ENCODE measurements at regions of chr13 and their contacts with region 1.

Region 1: GRCh38 chr13:41137951-41138350 is 5.3 kb upstream of the KBTBD6 start:
- DNase-seq: peak; percentile 81
- ATAC-seq: peak; percentile 54
- H3K4me3 ChIP-seq: peak overlapping the region; percentile 41; the same call in 1 of the 2 replicates
- H3K27ac ChIP-seq: peak overlapping the region; percentile 99
- H3K4me1 ChIP-seq: peaks cover 41% of the 10 kb centered on the region
- H3K27me3 ChIP-seq: no peaks in the 10 kb centered on the region
- CTCF ChIP-seq: no peak

Region 2: GRCh38 chr13:41188584-41188983 is 50.6 kb after region 1 on chr13:
- CTCF ChIA-PET with region 1: no interaction called
- POLR2A ChIA-PET with region 1: interaction called, 24 read pairs
- intact Hi-C with region 1: loop called (anchors 1 kb)
- DNase-seq: peak; percentile 78
- ATAC-seq: peak; percentile 92
- H3K4me3 ChIP-seq: peak overlapping the region; percentile 17; the same call in 1 of the 2 replicates
- H3K27ac ChIP-seq: peak overlapping the region; percentile 65
- H3K4me1 ChIP-seq: peaks cover 29% of the 10 kb centered on the region
- H3K27me3 ChIP-seq: no peaks in the 10 kb centered on the region
- CTCF ChIP-seq: no peak